WTC11 (cell line): ENCODE measurements at regions of chr5 and their contacts with region 1.

Region 1: GRCh38 chr5:59506285-59506877 is 387.1 kb downstream of the PDE4D start:
- DNase-seq: no peak
- ATAC-seq: no peak
- H3K4me3 Mint-ChIP-seq: no peak overlapping the region
- H3K27ac Mint-ChIP-seq: no peak overlapping the region
- H3K4me1 Mint-ChIP-seq: no peaks in the 10 kb centered on the region; the same call in 1 of the 2 replicates
- H3K27me3 Mint-ChIP-seq: no peaks in the 10 kb centered on the region
- CTCF ChIP-seq: 0 out of 2 replicates have a peak, but pooled peaks have one; percentile 12

Region 2: GRCh38 chr5:59416451-59416850 is 89.9 kb before region 1 on chr5:
- CTCF ChIA-PET with region 1: no interaction called
- POLR2A ChIA-PET with region 1: no interaction called
- DNase-seq: no peak
- ATAC-seq: no peak
- H3K4me3 Mint-ChIP-seq: no peak overlapping the region
- H3K27ac Mint-ChIP-seq: no peak overlapping the region
- H3K4me1 Mint-ChIP-seq: peaks cover 3% of the 10 kb centered on the region
- H3K27me3 Mint-ChIP-seq: 0 out of 2 replicates have a peak, but pooled peaks cover 4% of the 10 kb centered on the region
- CTCF ChIP-seq: no peak

Region 3: DNA sequence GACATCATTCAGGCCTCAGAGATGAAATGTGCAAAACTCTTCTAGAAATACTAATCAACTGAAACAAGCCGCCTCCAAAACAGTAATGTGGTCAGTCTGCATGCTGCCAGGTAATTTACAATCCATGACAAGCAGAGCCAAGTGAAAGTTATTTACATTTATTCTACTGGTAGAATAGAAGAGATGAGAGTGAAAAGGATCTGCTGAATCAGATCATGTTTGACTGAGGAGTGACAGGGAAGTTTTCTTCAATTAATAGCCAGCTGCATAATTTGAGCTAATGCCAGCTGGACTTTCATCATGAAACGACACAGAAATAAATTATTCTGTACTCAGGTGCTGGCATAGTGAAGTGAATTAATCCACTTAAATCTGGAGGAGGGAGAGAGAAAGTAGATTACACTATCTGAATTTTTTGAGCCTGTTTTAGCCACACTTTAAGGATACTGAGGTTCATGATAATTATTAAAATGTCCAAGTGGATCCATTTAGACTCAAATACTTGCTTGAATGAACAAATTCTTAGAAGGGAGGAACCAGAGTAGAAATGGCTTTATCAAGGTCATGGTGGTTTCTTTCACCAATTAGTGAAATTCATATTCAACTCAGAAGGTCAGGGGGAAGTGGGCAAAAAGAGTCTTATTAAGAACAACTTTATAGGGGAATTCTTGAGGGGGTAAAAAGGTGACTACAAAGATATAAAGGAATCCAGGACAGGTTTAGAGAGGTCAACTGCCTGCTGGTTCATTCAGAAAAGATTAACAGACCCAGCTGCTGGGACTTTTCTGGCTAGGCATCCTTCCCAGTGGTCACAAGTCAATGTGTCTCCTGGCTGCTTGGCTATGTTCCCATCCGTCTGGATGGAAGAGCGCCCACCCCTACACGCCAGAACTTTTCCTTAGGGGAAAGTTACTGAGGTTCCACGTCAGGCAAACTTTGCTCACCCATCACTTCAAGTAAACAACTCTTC is 36.8 kb after region 1 on chr5:
- CTCF ChIA-PET with region 1: no interaction called
- POLR2A ChIA-PET with region 1: no interaction called
- DNase-seq: no peak
- ATAC-seq: 0 out of 2 replicates have a peak, but pooled peaks have one; percentile 20
- H3K4me3 Mint-ChIP-seq: no peak overlapping the region
- H3K27ac Mint-ChIP-seq: 0 out of 2 replicates have a peak overlapping the region, but pooled peaks have one; percentile 13
- H3K4me1 Mint-ChIP-seq: peaks cover 22% of the 10 kb centered on the region
- H3K27me3 Mint-ChIP-seq: no peaks in the 10 kb centered on the region
- CTCF ChIP-seq: no peak

Region 4: GRCh38 chr5:59587489-59588337 is 81.3 kb after region 1 on chr5:
- CTCF ChIA-PET with region 1: interaction called, 16 read pairs
- POLR2A ChIA-PET with region 1: no interaction called
- DNase-seq: peak; percentile 86
- ATAC-seq: peak; percentile 100
- H3K4me3 Mint-ChIP-seq: peak overlapping the region; percentile 53
- H3K27ac Mint-ChIP-seq: no peak overlapping the region; the same call in none of the 2 replicates
- H3K4me1 Mint-ChIP-seq: peaks cover 52% of the 10 kb centered on the region
- H3K27me3 Mint-ChIP-seq: no peaks in the 10 kb centered on the region
- CTCF ChIP-seq: 0 out of 2 replicates have a peak, but pooled peaks have one; percentile 20

Region 5: GRCh38 chr5:59660737-59661136 is 154.4 kb after region 1 on chr5:
- CTCF ChIA-PET with region 1: interaction called, 16 read pairs
- POLR2A ChIA-PET with region 1: no interaction called
- DNase-seq: no peak
- ATAC-seq: peak; percentile 34; the same call in 1 of the 2 replicates
- H3K4me3 Mint-ChIP-seq: no peak overlapping the region
- H3K27ac Mint-ChIP-seq: no peak overlapping the region
- H3K4me1 Mint-ChIP-seq: peaks cover 33% of the 10 kb centered on the region
- H3K27me3 Mint-ChIP-seq: no peaks in the 10 kb centered on the region
- CTCF ChIP-seq: no peak

Region 6: DNA sequence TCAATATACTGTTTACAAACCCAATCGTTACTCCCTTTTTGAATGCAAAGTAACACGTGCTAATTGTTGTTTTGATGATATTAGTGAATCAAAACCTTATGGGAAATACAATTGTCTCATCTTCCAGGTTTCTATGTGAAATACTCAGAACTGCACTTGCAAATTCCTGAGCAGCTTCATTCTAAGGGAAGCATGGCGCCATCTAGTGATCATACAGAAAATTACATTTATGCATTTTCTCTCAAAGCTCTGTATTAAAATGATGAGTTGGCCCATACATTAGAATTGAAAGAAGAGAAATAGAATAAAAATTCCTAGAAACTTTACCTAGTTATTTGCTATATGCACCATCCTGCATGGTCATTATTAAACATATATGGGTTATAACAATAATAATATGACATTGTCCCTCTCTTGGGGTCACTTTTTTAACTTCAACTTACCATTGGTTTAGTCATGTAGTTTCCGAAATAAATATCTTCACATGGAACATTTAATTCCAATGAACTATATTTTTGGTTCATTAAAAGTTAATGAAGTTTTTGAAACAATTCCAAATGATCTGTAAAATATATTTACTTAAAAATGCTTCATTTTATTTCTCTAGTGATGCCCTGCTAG is 167.2 kb after region 1 on chr5:
- CTCF ChIA-PET with region 1: interaction called, 22 read pairs
- POLR2A ChIA-PET with region 1: no interaction called
- DNase-seq: no peak
- ATAC-seq: 0 out of 2 replicates have a peak, but pooled peaks have one; percentile 36
- H3K4me3 Mint-ChIP-seq: no peak overlapping the region
- H3K27ac Mint-ChIP-seq: peak overlapping the region; percentile 55; the same call in 1 of the 2 replicates
- H3K4me1 Mint-ChIP-seq: peaks cover 6% of the 10 kb centered on the region
- H3K27me3 Mint-ChIP-seq: no peaks in the 10 kb centered on the region
- CTCF ChIP-seq: peak; percentile 81

Region 7: DNA sequence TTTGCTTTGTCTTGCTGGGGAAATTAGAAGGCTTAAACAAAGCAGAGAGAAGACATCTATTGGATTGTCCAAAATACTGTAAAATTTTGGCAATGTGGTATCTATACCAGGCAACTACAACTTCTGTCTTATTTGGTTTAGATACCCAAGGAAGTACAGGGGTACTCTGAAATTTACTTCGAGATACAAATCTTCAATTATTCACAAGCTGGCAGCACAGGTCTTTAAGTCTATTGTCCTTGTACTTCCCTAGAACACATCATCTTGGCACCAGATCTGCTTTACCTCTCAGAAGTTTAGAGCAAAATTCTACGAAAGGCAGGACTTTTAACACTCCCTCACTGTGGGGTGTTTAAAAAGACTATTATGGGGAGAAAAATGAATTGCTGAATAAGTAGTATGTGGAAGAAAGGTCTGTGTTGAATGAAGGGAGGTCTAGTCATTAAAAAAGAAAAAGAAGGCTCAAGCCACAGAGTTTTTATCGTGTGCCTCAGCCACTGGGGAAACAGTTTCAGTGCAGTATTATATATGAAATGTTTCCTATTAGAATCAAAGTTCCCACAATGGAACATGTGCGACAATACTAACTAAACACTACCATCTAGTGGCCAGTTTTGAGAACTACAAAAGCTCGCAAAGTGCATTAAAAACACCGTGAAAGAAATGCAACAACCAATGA is 293.4 kb after region 1 on chr5:
- CTCF ChIA-PET with region 1: interaction called, 14 read pairs
- POLR2A ChIA-PET with region 1: no interaction called
- DNase-seq: no peak
- ATAC-seq: peak; percentile 61
- H3K4me3 Mint-ChIP-seq: no peak overlapping the region
- H3K27ac Mint-ChIP-seq: no peak overlapping the region
- H3K4me1 Mint-ChIP-seq: peaks cover 15% of the 10 kb centered on the region
- H3K27me3 Mint-ChIP-seq: no peaks in the 10 kb centered on the region
- CTCF ChIP-seq: no peak; the same call in none of the 2 replicates

Region 8: GRCh38 chr5:59829386-59829785 is 323.0 kb after region 1 on chr5:
- CTCF ChIA-PET with region 1: no interaction called
- POLR2A ChIA-PET with region 1: no interaction called
- DNase-seq: no peak
- ATAC-seq: no peak
- H3K4me3 Mint-ChIP-seq: no peak overlapping the region
- H3K27ac Mint-ChIP-seq: peak overlapping the region; percentile 80; the same call in 1 of the 2 replicates
- H3K4me1 Mint-ChIP-seq: peaks cover 39% of the 10 kb centered on the region
- H3K27me3 Mint-ChIP-seq: no peaks in the 10 kb centered on the region
- CTCF ChIP-seq: no peak

Region 9: DNA sequence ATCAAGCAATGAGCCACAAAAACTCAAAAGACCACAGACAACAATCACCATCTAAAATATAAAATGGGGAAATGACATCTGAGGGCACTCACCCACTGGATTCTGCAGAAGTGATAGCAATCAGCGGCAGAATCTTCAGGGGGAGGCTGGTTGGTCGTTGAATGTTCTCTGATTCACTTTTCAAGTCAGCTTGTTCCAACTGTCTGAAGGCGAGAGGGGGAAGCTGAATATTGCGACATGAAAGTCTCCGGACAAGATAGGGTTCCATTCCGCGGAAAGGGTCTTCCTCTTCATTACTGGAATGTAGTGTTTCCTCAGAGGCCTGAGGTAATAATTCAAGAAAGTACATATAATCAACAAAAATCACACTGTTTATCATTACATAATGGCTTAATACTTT is 482.0 kb after region 1 on chr5:
- CTCF ChIA-PET with region 1: no interaction called
- POLR2A ChIA-PET with region 1: no interaction called
- DNase-seq: no peak
- ATAC-seq: no peak
- H3K4me3 Mint-ChIP-seq: no peak overlapping the region
- H3K27ac Mint-ChIP-seq: no peak overlapping the region
- H3K4me1 Mint-ChIP-seq: no peaks in the 10 kb centered on the region
- H3K27me3 Mint-ChIP-seq: no peaks in the 10 kb centered on the region
- CTCF ChIP-seq: no peak